ENCODE measurements at regions of chr20 and their contacts with region 1.

Region 1: DNA sequence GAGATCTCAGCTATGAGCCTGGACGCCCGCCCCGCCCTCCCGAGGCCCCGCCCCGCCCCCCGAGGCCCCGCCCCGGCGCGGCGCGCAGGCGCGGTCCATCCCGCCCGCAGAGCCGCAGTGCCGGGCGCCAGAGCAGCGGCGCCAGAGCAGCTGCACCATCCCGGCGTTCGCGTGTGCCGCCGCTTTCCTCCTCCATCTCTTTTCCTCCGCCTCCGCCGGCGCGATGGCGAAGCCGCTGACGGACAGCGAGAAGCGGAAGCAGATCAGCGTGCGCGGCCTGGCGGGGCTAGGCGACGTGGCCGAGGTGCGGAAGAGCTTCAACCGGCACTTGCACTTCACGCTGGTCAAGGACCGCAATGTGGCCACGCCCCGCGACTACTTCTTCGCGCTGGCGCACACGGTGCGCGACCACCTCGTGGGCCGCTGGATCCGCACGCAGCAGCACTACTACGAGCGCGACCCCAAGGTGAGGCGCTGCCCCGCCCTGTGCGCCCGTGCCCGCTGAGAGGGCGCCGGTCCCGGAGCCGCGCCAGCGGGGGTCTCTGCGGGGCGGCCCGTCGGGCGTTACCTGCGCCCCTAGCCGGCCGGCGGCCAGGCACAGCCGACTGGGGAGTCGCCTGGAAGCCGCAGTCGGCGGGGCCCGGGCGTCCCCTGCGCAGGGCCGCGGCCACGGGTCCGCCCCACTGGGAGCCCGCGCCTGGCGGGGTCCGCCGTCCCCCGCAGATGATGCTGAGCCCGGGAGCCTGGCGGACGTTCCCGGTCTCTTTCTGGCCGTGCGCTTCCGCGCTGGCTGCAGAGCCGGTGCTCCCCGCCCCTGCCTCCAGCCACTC is at the start of gene PYGB:
- DNase-seq: peak; percentile 71 to 93 (median 90)
- ATAC-seq: peak; percentile 89
- H3K4me3 ChIP-seq: peak within 1 kb of the TSS; percentile 71
- H3K27ac ChIP-seq: peak within 1 kb of the TSS; percentile 58
- H3K4me1 ChIP-seq: peaks cover 10 to 21% of the 10 kb centered on the region in 2 experiments; a peak in 4 of 5 replicates
- H3K27me3 ChIP-seq: no peaks in the 10 kb centered on the region
- CTCF ChIP-seq: no peak
- EP300 ChIP-seq: no peak
- POLR2A ChIP-seq: peak; percentile 86
- RAD21 ChIP-seq: no peak
- polyA plus RNA-seq, gene PYGB: 0.34 to 0.46 TPM

Region 2: DNA sequence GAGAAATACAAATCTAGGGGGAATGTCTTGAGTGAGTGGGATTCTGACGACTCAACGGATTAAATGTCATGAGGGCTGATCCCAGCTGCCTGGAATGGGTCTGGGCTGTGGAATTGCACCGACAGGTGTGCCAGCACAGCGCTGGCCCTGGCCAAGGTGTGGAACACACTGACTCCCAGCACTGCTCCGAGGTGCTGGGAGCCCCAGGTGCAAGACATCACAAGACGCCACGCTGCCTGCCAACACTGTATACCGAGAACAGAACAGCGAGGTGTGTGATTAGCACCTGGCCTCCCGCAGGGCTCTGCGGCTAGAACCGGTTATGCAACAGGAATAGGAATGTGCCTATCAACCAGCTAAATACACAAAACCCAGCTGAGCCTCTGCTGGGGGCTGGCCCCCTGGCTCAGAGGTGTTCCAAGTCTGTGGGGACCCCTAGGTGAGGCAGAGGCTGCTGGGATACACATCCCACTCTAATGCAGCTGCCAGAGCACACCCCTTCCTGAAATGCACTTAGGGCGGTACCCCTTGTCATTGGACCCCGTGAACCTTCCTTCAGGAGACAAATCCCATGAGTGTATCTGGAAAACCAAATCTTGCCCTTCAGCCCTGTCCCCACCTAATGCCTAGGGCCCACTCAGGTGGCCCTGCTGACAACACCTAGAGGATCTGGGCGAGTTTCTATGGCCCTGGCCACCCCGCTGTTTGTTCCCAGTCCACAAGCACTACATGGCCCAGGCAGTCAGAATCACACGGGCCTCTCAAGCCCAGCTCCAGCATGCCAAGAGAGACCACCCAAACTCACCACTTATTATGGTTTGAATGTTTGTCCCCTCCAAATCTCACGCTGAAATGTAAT is 230.7 kb before region 1 on chr20:
- CTCF ChIA-PET with region 1: no interaction called
- POLR2A ChIA-PET with region 1: no interaction called
- in situ Hi-C with region 1: no loop called
- intact Hi-C with region 1: no loop called
- DNase-seq: no peak
- ATAC-seq: no peak
- H3K4me3 ChIP-seq: no peak overlapping the region
- H3K27ac ChIP-seq: no peak overlapping the region
- H3K4me1 ChIP-seq: no peaks in the 10 kb centered on the region
- H3K27me3 ChIP-seq: peaks cover 1 to 59% of the 10 kb centered on the region in 2 experiments
- CTCF ChIP-seq: no peak
- EP300 ChIP-seq: no peak
- POLR2A ChIP-seq: no peak
- RAD21 ChIP-seq: no peak

Region 3: GRCh38 chr20:25195014-25195961 is 52.9 kb before region 1 on chr20 and contains the start of gene ENTPD6:
- CTCF ChIA-PET with region 1: no interaction called
- POLR2A ChIA-PET with region 1: no interaction called
- in situ Hi-C with region 1: no loop called
- intact Hi-C with region 1: loop called (anchors 5 kb)
- DNase-seq: peak; percentile 90 to 98 (median 97)
- ATAC-seq: peak; percentile 92
- H3K4me3 ChIP-seq: peak within 1 kb of the TSS; percentile 70
- H3K27ac ChIP-seq: peak within 1 kb of the TSS; percentile 74
- H3K4me1 ChIP-seq: peaks cover 7 to 22% of the 10 kb centered on the region in 2 experiments; a peak in 4 of 5 replicates
- H3K27me3 ChIP-seq: peaks cover 5 to 15% of the 10 kb centered on the region in 2 experiments; a peak in 3 of 5 replicates
- CTCF ChIP-seq: peak in 2 of 3 experiments; percentile 18 to 19; a peak in 1 of 6 replicates
- EP300 ChIP-seq: no peak
- POLR2A ChIP-seq: peak; percentile 60
- RAD21 ChIP-seq: no peak
- polyA plus RNA-seq, gene ENTPD6: 0.82 to 1.5 TPM

Region 4: DNA sequence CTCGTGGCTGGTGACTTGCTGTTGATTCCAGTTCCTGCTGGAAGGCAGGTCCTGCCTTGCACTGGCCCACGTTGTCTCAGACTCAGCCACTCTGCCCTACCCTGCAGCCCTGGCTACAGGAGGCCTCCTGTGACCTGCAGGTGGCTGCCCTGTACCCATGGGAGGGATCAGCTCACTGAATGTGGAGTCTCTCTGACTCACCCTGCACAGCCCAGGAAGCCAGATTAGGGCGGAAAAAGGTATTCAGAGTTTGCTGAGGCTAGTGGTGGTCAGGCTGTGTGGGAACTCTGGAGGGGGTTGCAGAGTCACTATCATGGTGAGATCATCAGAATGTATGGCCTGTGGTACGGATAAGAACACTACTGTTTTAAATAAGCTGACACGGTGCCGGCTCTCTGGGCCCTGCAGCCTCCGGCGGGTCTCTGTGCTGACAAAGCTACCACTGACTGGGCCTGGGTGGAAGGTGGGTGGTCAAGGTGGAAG is 25.0 kb before region 1 on chr20:
- CTCF ChIA-PET with region 1: no interaction called
- POLR2A ChIA-PET with region 1: interaction called, 3 read pairs
- in situ Hi-C with region 1: no loop called
- intact Hi-C with region 1: loop called (anchors 1 kb)
- DNase-seq: peak; percentile 39 to 81 (median 58)
- ATAC-seq: peak; percentile 91
- H3K4me3 ChIP-seq: no peak overlapping the region
- H3K27ac ChIP-seq: peak overlapping the region; percentile 81; the same call in 2 of the 3 replicates
- H3K4me1 ChIP-seq: peaks cover 32 to 55% of the 10 kb centered on the region in 2 experiments
- H3K27me3 ChIP-seq: no peaks in the 10 kb centered on the region
- CTCF ChIP-seq: peak; percentile 9 to 31 (median 25); a peak in 3 of 6 replicates
- EP300 ChIP-seq: peak; percentile 50; the same call in 1 of the 2 replicates
- POLR2A ChIP-seq: no peak
- RAD21 ChIP-seq: peak; percentile 16 to 50; a peak in 2 of 4 replicates